ENCODE measurements at regions of chr17 and their contacts with region 1.

Region 1: GRCh38 chr17:75109407-75110233 is at the start of gene ARMC7:
- DNase-seq: peak; percentile 100
- H3K4me3 ChIP-seq: peak within 1 kb of the TSS; percentile 67 to 75
- H3K27ac ChIP-seq: peak within 1 kb of the TSS in 1 of 2 experiments; percentile 60; a peak in 2 of 4 replicates
- H3K4me1 ChIP-seq: peaks cover 0 to 25% of the 10 kb centered on the region in 2 experiments; a peak in 1 of 4 replicates
- H3K27me3 ChIP-seq: no peaks in the 10 kb centered on the region
- CTCF ChIP-seq: no peak
- EP300 ChIP-seq: no peak
- RAD21 ChIP-seq: no peak
- polyA plus RNA-seq, gene ARMC7: 7.3 and 10.8 TPM in 2 replicates

Region 2: DNA sequence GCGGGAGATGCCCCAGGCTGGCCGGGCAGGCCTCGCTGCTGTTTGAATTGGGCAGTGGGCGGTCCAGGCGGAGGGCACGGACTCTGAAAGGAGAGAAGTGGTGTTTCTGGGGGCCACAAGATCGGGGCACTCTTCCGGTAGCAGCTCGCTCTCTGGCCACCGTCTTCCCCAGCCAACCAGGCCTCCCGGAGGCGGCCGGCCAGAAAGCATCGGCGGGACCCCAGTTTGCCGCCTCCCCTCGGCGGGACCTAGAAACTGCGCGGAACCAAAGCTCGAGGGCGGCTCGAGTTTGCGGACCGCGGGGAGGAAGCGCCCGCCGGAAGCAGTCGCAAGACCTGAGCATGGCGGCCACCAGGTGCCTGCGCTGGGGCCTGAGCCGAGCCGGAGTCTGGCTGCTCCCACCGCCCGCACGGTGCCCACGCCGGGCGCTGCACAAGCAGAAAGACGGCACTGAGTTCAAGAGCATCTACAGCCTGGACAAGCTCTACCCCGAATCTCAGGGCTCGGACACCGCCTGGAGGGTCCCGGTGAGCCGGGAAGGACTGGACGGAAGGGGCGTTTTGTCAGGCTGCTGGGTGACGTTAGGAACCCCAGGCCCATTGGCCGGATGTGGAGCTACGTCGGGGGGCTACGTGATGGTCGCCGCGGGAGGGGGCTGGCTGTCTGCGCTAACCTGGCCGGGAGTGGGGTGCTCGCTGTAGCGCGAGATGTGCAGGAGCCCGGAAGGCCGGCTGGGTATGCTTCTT is 97.1 kb before region 1 on chr17 and contains the start of gene MRPL58:
- CTCF ChIA-PET with region 1: interaction called, 39 read pairs
- POLR2A ChIA-PET with region 1: interaction called, 5 read pairs
- DNase-seq: peak; percentile 96
- H3K4me3 ChIP-seq: peak within 1 kb of the TSS; percentile 65 to 77
- H3K27ac ChIP-seq: peak within 1 kb of the TSS; percentile 88 to 95
- H3K4me1 ChIP-seq: peaks cover 17 to 26% of the 10 kb centered on the region in 2 experiments; a peak in 3 of 4 replicates
- H3K27me3 ChIP-seq: no peaks in the 10 kb centered on the region
- CTCF ChIP-seq: peak; percentile 59
- EP300 ChIP-seq: peak; percentile 11 to 37; a peak in 2 of 4 replicates
- RAD21 ChIP-seq: peak; percentile 50
- polyA plus RNA-seq, gene MRPL58: 87.3 and 89.2 TPM in 2 replicates

Region 3: DNA sequence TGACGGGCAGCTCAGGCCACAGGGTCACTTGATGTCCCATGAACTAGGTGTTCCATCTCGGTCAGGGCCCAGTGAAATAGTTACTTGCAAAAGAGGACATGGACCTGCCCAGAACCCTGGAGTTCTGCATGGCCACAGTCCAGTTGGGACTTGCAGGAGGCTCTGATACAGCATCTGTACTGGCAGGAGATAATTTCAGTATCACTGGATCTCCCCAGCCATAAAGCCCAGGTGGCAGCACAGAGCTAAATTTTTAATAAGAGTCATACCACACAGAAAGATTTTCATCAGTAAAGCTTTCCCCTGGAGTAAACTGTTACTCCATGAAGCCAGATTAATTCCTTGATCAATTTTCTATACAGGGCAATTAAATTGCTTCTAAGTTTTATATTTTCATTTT is 39.8 kb before region 1 on chr17:
- CTCF ChIA-PET with region 1: interaction called, 15 read pairs
- POLR2A ChIA-PET with region 1: no interaction called
- DNase-seq: peak; percentile 58
- H3K4me3 ChIP-seq: no peak overlapping the region
- H3K27ac ChIP-seq: no peak overlapping the region
- H3K4me1 ChIP-seq: no peaks in the 10 kb centered on the region; a peak in 1 of 4 replicates
- H3K27me3 ChIP-seq: no peaks in the 10 kb centered on the region
- CTCF ChIP-seq: peak; percentile 52
- EP300 ChIP-seq: no peak
- RAD21 ChIP-seq: peak; percentile 60

Region 4: DNA sequence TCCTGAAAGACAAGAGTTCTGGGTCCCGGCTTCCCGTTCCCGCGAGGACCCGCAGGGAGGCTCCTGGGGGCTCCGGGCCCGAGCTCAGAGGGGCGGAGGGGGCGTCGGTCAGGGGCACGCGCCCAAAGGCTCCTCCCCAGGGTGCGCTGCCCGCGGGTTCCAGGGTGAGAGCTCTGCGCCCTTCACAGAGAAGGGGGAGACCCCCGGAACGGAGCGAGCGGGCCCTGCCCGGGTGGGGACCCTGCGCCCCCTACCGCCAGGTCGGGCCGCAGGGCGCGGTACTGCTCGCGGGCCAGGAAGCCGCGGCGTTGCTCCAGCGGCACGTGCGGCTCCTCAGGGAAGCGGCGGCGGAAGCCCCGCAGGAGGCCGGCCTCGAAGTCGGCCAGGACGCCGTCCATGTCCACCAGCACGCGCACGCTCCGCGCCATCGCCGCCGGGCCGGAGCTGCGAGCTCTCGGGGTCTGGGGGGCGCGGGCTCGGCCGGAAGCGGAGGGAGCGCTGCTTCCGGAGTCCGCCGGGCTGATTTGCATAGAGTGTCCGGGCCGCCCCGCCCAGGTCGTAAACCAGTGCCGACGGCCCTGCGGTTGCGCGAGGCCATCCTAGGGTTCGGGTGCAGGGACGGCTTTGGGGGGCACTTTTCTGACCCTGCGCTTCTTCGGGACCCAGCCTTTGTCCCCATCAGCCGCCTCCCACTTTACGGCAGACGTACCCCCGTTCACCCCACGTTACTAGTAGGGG is 21.8 kb after region 1 on chr17 and contains the start of gene NT5C:
- CTCF ChIA-PET with region 1: interaction called, 422 read pairs
- POLR2A ChIA-PET with region 1: interaction called, 22 read pairs
- DNase-seq: peak; percentile 97
- H3K4me3 ChIP-seq: peak within 1 kb of the TSS; percentile 64 to 88
- H3K27ac ChIP-seq: peak within 1 kb of the TSS; percentile 78 to 90
- H3K4me1 ChIP-seq: peaks cover 5 to 16% of the 10 kb centered on the region in 2 experiments; a peak in 2 of 4 replicates
- H3K27me3 ChIP-seq: no peaks in the 10 kb centered on the region
- CTCF ChIP-seq: peak; percentile 74
- EP300 ChIP-seq: no peak
- RAD21 ChIP-seq: 0 out of 2 replicates have a peak, but pooled peaks have one; percentile 16
- polyA plus RNA-seq, gene NT5C: 111 and 114 TPM in 2 replicates

Region 5: GRCh38 chr17:75182569-75183450 is 73.2 kb after region 1 on chr17 and contains the start of gene SUMO2:
- CTCF ChIA-PET with region 1: interaction called, 107 read pairs
- POLR2A ChIA-PET with region 1: interaction called, 9 read pairs
- DNase-seq: peak; percentile 100
- H3K4me3 ChIP-seq: peak within 1 kb of the TSS; percentile 67 to 93
- H3K27ac ChIP-seq: peak within 1 kb of the TSS; percentile 90 to 99
- H3K4me1 ChIP-seq: peaks cover 3 to 6% of the 10 kb centered on the region in 2 experiments; a peak in 2 of 4 replicates
- H3K27me3 ChIP-seq: no peaks in the 10 kb centered on the region
- CTCF ChIP-seq: no peak
- EP300 ChIP-seq: 0 out of 4 replicates have a peak, but pooled peaks of 1 of the 2 experiments have one; percentile 17
- RAD21 ChIP-seq: no peak
- polyA plus RNA-seq, gene SUMO2: 85.5 and 114 TPM in 2 replicates

Region 6: DNA sequence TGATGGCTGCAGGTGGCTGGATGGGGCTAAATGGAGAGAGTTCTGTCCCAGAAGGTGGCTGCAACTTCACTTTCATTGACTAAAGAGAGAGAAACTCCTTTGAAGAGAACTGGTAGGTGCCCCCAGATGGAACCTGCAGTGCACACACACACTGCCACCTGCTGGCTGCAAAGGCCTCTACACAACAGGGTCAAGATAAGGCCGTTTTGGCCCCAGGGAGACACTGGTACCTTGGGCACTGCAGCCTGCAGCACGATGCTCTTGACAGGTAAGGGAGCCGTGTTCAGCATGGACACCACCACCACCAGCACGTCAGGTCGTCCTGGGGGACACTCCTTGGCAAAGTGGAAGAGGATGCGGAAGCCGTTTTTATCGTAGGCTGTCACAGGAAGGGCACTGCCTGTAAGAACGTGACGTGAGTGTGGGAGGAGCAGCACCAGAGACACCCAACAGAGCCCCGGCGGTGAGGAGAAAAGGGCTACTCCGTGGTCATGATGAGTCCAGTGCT is 129.1 kb after region 1 on chr17:
- CTCF ChIA-PET with region 1: interaction called, 31 read pairs
- POLR2A ChIA-PET with region 1: interaction called, 4 read pairs
- DNase-seq: peak; percentile 90
- H3K4me3 ChIP-seq: no peak overlapping the region
- H3K27ac ChIP-seq: no peak overlapping the region
- H3K4me1 ChIP-seq: no peaks in the 10 kb centered on the region; a peak in 1 of 4 replicates
- H3K27me3 ChIP-seq: no peaks in the 10 kb centered on the region
- CTCF ChIP-seq: peak; percentile 98
- EP300 ChIP-seq: no peak
- RAD21 ChIP-seq: peak; percentile 54